Naive thymus-derived CD4-positive, alpha-beta T cell (primary cell): ENCODE measurements at regions of chr5 and their contacts with region 1.

Region 1: GRCh38 chr5:102755686-102756371 is 724 bp downstream of the PAM start:
- DNase-seq: peak; percentile 22 to 70 (median 39)
- ATAC-seq: peak; percentile 86
- H3K4me3 ChIP-seq: peak overlapping the region; percentile 83
- H3K4me3 Mint-ChIP-seq: peak overlapping the region; percentile 90 to 99 (median 94)
- H3K27ac ChIP-seq: peak overlapping the region; percentile 64
- H3K27ac Mint-ChIP-seq: peak overlapping the region; percentile 57 to 95 (median 91)
- H3K4me1 ChIP-seq: peaks cover 11 to 16% of the 10 kb centered on the region in 2 donors
- H3K4me1 Mint-ChIP-seq: peaks cover 22 to 45% (median 40%) of the 10 kb centered on the region in 7 donors
- H3K27me3 ChIP-seq: no peaks in the 10 kb centered on the region
- H3K27me3 Mint-ChIP-seq: peaks cover 0 to 15% (median under 1%) of the 10 kb centered on the region in 5 donors

Region 2: GRCh38 chr5:102772273-102772672 is 16.4 kb after region 1 on chr5:
- CTCF ChIA-PET with region 1: no interaction called
- POLR2A ChIA-PET with region 1: interaction called, 3 read pairs
- intact Hi-C with region 1: loop called in 1 of 2 experiments (anchors 2 kb)
- DNase-seq: no peak
- ATAC-seq: no peak
- H3K4me3 ChIP-seq: no peak overlapping the region
- H3K4me3 Mint-ChIP-seq: no peak overlapping the region
- H3K27ac ChIP-seq: no peak overlapping the region
- H3K27ac Mint-ChIP-seq: no peak overlapping the region
- H3K4me1 ChIP-seq: peaks cover 0 to 8% of the 10 kb centered on the region in 2 donors
- H3K4me1 Mint-ChIP-seq: peaks cover 5 to 39% (median 16%) of the 10 kb centered on the region in 7 donors
- H3K27me3 ChIP-seq: no peaks in the 10 kb centered on the region
- H3K27me3 Mint-ChIP-seq: no peaks in the 10 kb centered on the region

Region 3: DNA sequence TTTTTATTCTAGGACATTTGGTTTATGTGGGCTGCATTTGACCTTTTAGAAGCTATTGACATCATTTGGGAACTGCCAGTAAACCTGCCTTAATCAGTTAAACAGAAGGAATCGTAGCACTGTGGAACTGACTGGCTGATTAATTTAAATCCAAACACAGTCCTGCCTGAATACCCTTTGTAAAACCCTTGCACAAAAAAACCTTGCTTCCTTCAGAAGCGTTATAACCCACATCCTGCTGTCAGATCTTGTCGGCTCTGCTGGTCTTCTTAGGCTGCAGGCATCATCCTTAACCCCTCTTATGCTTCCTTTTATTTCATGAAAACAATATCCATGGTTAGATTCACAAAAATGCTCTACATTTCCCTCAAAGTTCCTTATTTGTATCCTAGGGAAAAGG is 45.5 kb after region 1 on chr5:
- CTCF ChIA-PET with region 1: no interaction called
- POLR2A ChIA-PET with region 1: no interaction called
- intact Hi-C with region 1: loop called in 1 of 2 experiments (anchors 1 kb)
- DNase-seq: peak in 7 of 9 donors; percentile 37 to 71 (median 66)
- ATAC-seq: peak; percentile 94
- H3K4me3 ChIP-seq: no peak overlapping the region
- H3K4me3 Mint-ChIP-seq: peak overlapping the region in 9 of 10 donors; percentile 40 to 75 (median 56)
- H3K27ac ChIP-seq: no peak overlapping the region
- H3K27ac Mint-ChIP-seq: peak overlapping the region in 4 of 9 donors; percentile 6 to 22 (median 15)
- H3K4me1 ChIP-seq: peaks cover 8 to 15% of the 10 kb centered on the region in 2 donors
- H3K4me1 Mint-ChIP-seq: peaks cover 30 to 65% (median 44%) of the 10 kb centered on the region in 7 donors
- H3K27me3 ChIP-seq: no peaks in the 10 kb centered on the region
- H3K27me3 Mint-ChIP-seq: no peaks in the 10 kb centered on the region

Region 4: DNA sequence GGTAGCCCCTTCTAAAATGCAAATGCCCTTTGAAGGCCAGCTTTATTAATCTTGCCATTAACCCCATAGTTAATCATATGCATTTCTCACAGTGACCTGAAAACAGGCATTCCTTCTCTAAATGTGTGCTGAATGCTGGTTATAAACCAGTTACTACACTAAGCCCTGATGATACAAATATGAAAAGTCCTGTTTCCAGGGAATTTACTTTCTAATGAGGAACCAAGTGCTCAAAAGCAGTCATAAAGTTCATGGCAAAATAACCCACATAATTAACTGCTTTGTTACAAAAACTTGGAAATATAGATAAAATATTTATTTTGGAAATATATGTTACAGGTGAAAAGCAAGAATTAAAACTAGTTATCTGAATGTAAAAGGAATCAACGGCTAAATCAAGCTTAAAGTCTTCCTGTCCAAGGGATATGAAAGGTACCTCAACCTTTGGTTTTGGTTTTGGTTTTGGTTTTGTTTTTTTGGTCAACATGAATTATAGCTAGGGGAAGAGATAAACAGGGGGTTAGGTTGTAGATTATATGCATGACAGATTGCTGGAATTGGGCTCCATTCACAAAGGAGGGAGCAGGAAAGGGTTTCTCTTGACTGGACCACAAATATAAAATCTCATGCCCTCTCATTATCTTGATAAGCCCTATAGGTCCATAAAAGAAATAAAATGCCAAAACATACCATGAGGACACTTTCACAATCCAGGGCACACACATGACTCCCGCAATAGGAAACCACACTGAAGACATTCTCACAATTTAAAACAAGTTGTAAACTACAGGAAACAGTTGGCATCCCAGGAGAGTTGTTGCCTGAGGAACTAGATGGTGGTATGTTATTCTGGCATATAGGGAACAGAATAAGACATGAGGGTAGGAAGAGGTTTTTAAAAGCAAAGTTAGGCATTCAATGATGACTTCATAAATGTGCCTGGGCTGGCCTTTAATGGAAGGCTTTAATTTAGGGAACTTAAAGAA is 456.0 kb after region 1 on chr5:
- CTCF ChIA-PET with region 1: no interaction called
- POLR2A ChIA-PET with region 1: no interaction called
- intact Hi-C with region 1: loop called in 1 of 2 experiments (anchors 5 kb)
- DNase-seq: no peak
- ATAC-seq: peak; percentile 12
- H3K4me3 ChIP-seq: no peak overlapping the region
- H3K4me3 Mint-ChIP-seq: peak overlapping the region in 4 of 10 donors; percentile 7 to 71 (median 21)
- H3K27ac ChIP-seq: no peak overlapping the region
- H3K27ac Mint-ChIP-seq: peak overlapping the region in 4 of 9 donors; percentile 41 to 69 (median 56)
- H3K4me1 ChIP-seq: peaks cover 0 to 7% of the 10 kb centered on the region in 2 donors
- H3K4me1 Mint-ChIP-seq: peaks cover 10 to 31% (median 14%) of the 10 kb centered on the region in 7 donors
- H3K27me3 ChIP-seq: no peaks in the 10 kb centered on the region
- H3K27me3 Mint-ChIP-seq: no peaks in the 10 kb centered on the region